GM10248 (cell line): ENCODE measurements at regions of chr9 and their contacts with region 1.

Region 1: GRCh38 chr9:114487607-114488300 is 17.5 kb downstream of the WHRN start:
- DNase-seq: peak; percentile 70
- CTCF ChIP-seq: peak; percentile 80

Region 2: GRCh38 chr9:114472765-114473446 is 14.8 kb before region 1 on chr9:
- CTCF ChIA-PET with region 1: interaction called, 31 read pairs
- POLR2A ChIA-PET with region 1: no interaction called
- DNase-seq: no peak
- CTCF ChIP-seq: no peak

Region 3: DNA sequence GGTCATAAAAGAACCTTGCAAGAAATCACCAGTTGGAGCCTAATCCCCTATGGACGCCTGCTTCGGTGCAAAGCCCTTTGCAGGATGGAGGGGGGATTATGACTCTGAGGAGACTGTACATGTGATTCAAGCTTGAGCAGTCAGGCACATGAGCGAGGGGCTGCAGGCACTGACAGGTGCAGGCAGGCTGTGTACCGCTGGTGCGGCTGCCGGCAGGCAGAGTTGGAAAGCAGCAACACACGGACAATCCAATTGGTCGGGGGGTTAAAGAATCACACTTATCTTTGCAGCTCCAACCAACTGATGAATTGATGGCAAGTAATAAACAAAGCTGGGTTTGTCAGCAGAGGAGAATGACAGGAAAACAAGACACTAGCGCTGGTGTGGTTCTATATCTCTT is 11.8 kb after region 1 on chr9:
- CTCF ChIA-PET with region 1: interaction called, 39 read pairs
- POLR2A ChIA-PET with region 1: no interaction called
- DNase-seq: no peak
- CTCF ChIP-seq: no peak

Region 4: GRCh38 chr9:114733816-114734215 is 246.1 kb after region 1 on chr9:
- CTCF ChIA-PET with region 1: no interaction called
- POLR2A ChIA-PET with region 1: no interaction called
- DNase-seq: no peak
- CTCF ChIP-seq: no peak

Region 5: GRCh38 chr9:114754581-114754980 is 266.8 kb after region 1 on chr9:
- CTCF ChIA-PET with region 1: no interaction called
- POLR2A ChIA-PET with region 1: no interaction called
- DNase-seq: peak; percentile 43
- CTCF ChIP-seq: no peak